Breast epithelium (tissue), 4 donors: ENCODE measurements at regions of chr2 and their contacts with region 1.

Region 1: GRCh38 chr2:150403457-150403856 is 84.0 kb downstream of the RND3 start:
- DNase-seq: no peak
- H3K4me3 ChIP-seq: no peak overlapping the region
- H3K27ac ChIP-seq: no peak overlapping the region
- H3K4me1 ChIP-seq: no peaks in the 10 kb centered on the region
- H3K27me3 ChIP-seq: no peaks in the 10 kb centered on the region
- CTCF ChIP-seq: no peak
- POLR2A ChIP-seq: no peak

Region 2: DNA sequence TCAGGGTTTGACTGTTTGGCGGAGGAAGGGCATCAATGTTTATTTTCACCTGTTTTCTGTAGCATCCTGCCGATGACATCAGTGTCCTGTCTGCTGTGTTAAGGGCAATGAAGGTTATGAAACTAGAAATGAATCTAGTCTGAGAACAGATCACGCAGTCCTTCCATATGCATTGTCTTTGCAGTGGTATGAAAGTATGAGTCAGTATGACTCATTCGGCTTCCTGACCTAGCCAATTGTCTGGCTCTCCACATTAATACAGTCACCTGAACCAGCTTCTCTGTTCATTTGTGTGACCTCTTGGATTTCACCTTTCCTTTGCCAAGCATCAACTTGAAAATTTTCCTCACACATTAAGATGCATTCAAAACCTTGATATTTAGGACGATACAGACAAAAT is 269.8 kb before region 1 on chr2:
- intact Hi-C with region 1: loop called (anchors 10 kb)
- DNase-seq: no peak
- H3K4me3 ChIP-seq: no peak overlapping the region
- H3K27ac ChIP-seq: no peak overlapping the region
- H3K4me1 ChIP-seq: no peaks in the 10 kb centered on the region
- H3K27me3 ChIP-seq: no peaks in the 10 kb centered on the region
- CTCF ChIP-seq: no peak
- POLR2A ChIP-seq: no peak

Region 3: GRCh38 chr2:150413910-150414309 is 10.5 kb after region 1 on chr2:
- intact Hi-C with region 1: no loop called
- DNase-seq: no peak
- H3K4me3 ChIP-seq: no peak overlapping the region
- H3K27ac ChIP-seq: no peak overlapping the region
- H3K4me1 ChIP-seq: no peaks in the 10 kb centered on the region
- H3K27me3 ChIP-seq: no peaks in the 10 kb centered on the region
- CTCF ChIP-seq: no peak
- POLR2A ChIP-seq: no peak